ENCODE measurements at regions of chr5 and their contacts with region 1.

Region 1: DNA sequence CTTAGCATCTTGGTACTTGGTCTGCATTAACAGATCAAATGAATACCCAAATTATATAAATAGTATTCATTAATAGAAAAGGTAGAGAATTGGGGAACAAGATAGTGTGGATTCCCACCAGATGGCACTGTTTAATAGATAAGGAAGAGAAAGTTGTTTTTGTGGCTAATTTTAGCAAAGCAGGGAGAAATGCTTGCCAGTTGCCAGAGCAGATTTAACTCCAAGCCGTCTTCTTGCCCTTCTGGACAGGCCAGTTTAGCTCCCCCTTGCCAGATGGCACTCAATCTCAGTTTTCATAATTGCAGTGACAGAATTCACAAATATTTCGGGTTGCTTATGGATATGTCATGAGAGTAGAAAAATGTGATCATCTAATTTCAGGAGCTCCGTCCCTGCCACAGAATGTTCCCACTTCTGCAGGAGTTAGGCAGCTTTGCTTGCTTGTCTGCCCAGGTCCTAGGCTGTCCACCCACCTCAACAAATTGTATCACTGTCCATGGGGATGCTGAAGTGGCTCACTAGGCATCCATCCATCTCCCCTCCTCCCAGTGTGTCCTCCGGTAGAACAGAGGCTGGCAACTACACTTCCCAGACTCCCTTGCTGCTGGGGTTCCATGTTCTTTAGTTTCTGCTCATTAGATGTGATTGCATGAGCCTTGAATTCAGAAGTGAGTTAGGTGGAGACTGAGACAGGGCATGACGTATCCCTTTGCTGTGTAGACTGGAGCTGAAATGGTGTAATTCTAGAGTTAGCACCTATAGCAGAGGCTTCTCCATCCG is 11.8 kb upstream of the HEXB start:
- DNase-seq: peak in 5 of 7 donors; percentile 26 to 44 (median 30)
- H3K4me3 ChIP-seq: peak overlapping the region in 1 of 4 donors; percentile 46
- H3K27ac ChIP-seq: no peak overlapping the region
- H3K4me1 ChIP-seq: no peaks in the 10 kb centered on the region
- H3K27me3 ChIP-seq: no peaks in the 10 kb centered on the region
- CTCF ChIP-seq: peak; percentile 49 to 70 (median 66)
- POLR2A ChIP-seq: no peak

Region 2: DNA sequence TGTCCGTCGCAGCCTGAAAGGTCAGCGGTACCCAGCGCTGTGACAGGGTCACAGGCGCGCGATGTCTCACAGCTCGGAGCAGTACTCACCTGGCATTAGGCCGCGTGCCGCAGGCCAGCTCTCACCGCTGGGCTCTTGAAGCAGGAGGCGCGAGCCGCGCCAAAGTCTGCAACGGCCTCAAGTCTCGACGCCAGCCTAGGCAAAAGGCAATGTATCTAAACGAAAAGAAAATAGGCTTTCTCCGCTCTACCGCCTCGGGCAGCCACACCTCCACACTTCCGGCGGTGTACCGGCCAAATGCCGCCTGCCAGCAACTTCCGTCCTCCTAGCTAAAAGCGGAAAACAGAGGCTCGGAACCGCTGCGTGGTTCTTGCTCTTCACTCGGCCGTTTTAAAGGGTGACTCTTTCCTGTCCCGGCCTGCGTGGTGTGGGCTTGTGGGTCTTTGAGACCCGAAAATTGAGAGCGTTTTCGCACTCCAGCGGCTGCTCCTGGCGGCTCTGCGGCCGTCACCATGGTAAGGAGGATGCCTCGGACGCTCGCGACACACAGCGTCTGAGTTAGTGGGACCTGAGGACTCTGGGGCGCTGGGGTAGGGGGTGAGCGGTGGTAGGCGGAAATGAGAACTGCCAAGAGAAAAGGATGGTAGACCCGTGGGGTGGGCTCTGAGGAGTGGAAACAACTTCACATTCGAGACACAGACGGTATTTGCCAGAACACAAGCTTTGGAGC is 93.8 kb after region 1 on chr5 and contains the starts of genes GFM2 and NSA2:
- intact Hi-C with region 1: loop called in 1 of 2 experiments (anchors 10 kb)
- DNase-seq: peak; percentile 92 to 96 (median 93)
- H3K4me3 ChIP-seq: peak within 1 kb of the TSS; percentile 61 to 86 (median 74)
- H3K27ac ChIP-seq: peak within 1 kb of the TSS; percentile 25 to 80 (median 57)
- H3K4me1 ChIP-seq: peaks cover 9 to 23% of the 10 kb centered on the region in 2 donors
- H3K27me3 ChIP-seq: no peaks in the 10 kb centered on the region
- CTCF ChIP-seq: no peak
- POLR2A ChIP-seq: no peak
- total RNA-seq, gene GFM2: 23.5 to 80.7 (median 35.2) TPM
- total RNA-seq, gene NSA2: 55.9 to 165 (median 80.2) TPM

Region 3: DNA sequence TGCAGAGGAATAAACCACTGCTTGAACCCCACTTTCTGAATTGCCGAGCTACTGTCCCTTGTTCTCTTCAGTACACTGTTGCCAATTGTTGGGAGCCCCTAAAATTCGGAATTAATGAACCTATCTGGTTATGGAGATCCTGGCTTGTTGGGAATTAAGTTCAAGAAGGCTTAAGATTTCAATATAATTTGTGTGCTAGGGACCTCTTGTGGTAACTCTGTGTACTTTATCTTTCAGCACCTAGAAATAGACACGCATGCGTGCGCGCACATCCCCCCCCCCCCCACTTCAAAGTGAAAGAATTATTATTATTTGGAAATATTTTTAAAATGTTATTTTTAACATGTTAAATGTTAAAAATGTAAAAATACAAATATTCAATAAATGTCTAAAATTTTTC is 246.3 kb after region 1 on chr5:
- intact Hi-C with region 1: loop called (anchors 2 to 10 kb)
- DNase-seq: peak in 1 of 7 donors; percentile 6
- H3K4me3 ChIP-seq: no peak overlapping the region
- H3K27ac ChIP-seq: no peak overlapping the region
- H3K4me1 ChIP-seq: no peaks in the 10 kb centered on the region
- H3K27me3 ChIP-seq: no peaks in the 10 kb centered on the region
- CTCF ChIP-seq: peak; percentile 34 to 79 (median 64)
- POLR2A ChIP-seq: no peak